HEK293 (cell line): ENCODE measurements at regions of chr6 and their contacts with region 1.

Region 1: GRCh38 chr6:70221025-70221714 is 81.7 kb downstream of the COL9A1 start:
- H3K4me3 ChIP-seq: no peak overlapping the region
- H3K27ac ChIP-seq: no peak overlapping the region
- H3K4me1 ChIP-seq: no peaks in the 10 kb centered on the region
- CTCF ChIP-seq: 0 out of 2 replicates have a peak, but pooled peaks have one; percentile 27

Region 2: DNA sequence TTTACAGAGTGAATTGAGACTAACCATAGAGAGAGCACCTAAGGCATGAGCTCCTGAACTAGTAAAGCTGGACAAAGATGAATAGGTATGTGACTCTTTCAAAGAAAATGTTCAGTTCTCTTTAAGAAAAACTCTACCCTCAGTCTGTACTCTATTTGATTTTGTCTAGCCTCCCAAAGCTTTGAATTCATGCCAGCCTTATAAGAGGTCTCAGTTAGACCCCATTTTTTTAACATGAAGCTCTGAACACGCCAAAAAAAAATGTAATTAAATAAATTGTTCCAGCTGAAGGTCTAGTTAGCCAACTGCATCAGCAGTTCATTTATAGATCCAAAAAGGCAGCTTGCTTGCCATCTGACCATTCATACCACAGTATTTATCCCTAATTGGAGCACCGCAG is 10.1 kb after region 1 on chr6:
- CTCF ChIA-PET with region 1: interaction called, 52 read pairs
- POLR2A ChIA-PET with region 1: no interaction called
- H3K4me3 ChIP-seq: no peak overlapping the region
- H3K27ac ChIP-seq: no peak overlapping the region
- H3K4me1 ChIP-seq: no peaks in the 10 kb centered on the region
- CTCF ChIP-seq: no peak

Region 3: GRCh38 chr6:70241991-70242420 is 20.8 kb after region 1 on chr6:
- CTCF ChIA-PET with region 1: interaction called, 11 read pairs
- POLR2A ChIA-PET with region 1: no interaction called
- H3K4me3 ChIP-seq: no peak overlapping the region
- H3K27ac ChIP-seq: no peak overlapping the region
- H3K4me1 ChIP-seq: no peaks in the 10 kb centered on the region
- CTCF ChIP-seq: no peak

Region 4: GRCh38 chr6:70289299-70289698 is 68.1 kb after region 1 on chr6:
- CTCF ChIA-PET with region 1: interaction called, 26 read pairs
- POLR2A ChIA-PET with region 1: no interaction called
- H3K4me3 ChIP-seq: no peak overlapping the region
- H3K27ac ChIP-seq: no peak overlapping the region
- H3K4me1 ChIP-seq: no peaks in the 10 kb centered on the region
- CTCF ChIP-seq: 0 out of 2 replicates have a peak, but pooled peaks have one; percentile 20

Region 5: DNA sequence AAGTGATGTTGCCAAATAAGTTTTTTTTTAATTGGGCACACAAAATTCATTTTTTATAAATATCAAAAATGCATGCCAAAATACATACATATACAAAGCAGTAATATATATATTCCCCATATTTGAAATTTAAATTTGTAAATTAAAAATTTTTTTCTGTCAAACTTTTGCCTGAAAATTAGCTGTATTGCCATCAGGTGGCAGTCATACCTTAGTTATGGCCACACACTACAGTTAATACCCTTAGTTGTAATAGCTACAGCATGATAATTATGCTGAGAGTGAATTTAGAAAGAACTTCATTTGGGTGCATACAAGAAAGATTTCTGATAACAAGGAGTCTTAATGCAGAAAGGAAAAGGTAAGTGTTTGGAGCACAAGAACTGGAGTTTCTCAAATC is 299.4 kb after region 1 on chr6:
- CTCF ChIA-PET with region 1: interaction called, 10 read pairs
- POLR2A ChIA-PET with region 1: no interaction called
- H3K4me3 ChIP-seq: no peak overlapping the region
- H3K27ac ChIP-seq: no peak overlapping the region
- H3K4me1 ChIP-seq: no peaks in the 10 kb centered on the region
- CTCF ChIP-seq: 0 out of 2 replicates have a peak, but pooled peaks have one; percentile 27

Region 6: DNA sequence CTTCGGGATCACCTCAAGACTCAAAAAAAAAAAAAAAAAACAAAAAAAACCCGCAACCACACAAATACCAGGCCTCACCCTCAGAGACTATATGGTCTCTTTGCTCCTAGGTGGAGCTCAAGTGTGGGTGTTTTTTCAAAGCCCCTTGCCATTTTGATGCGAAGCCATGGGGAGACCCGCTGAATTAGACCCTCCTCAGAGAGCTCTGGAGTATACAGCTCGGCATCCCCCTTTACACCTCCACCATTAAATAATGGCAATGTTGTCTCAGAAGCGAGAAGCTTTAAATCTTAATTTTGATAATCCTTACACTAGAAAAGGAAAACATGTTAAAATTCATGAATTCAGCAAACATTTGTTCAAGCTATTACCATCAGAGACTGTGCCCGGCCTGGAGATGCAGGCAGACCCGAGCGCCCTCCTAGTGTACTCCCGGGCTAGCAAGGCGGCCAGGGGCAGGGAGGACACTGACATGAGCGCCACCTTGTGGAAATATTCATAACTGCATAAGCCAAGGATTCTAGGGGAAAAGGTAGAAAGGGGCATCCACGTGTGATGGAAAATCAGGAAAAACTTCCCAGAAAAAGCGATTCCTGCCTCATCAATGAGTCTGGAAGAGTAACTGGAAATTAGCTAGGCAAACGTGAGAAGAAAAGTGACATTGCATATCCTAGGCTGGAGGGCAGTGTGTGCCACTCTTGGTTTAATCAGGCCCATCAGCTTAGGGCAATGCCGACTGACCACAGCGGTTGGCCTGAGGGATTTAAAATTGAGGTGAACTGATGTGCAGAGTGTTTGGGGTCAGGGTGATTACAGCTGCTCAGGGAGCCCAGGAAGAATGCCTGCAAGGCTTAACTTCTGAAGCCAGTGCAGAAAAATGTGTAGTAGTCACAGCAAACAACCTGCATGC is 663.2 kb after region 1 on chr6:
- CTCF ChIA-PET with region 1: interaction called, 26 read pairs
- POLR2A ChIA-PET with region 1: no interaction called
- H3K4me3 ChIP-seq: no peak overlapping the region
- H3K27ac ChIP-seq: no peak overlapping the region
- H3K4me1 ChIP-seq: no peaks in the 10 kb centered on the region
- CTCF ChIP-seq: peak; percentile 82

Region 7: DNA sequence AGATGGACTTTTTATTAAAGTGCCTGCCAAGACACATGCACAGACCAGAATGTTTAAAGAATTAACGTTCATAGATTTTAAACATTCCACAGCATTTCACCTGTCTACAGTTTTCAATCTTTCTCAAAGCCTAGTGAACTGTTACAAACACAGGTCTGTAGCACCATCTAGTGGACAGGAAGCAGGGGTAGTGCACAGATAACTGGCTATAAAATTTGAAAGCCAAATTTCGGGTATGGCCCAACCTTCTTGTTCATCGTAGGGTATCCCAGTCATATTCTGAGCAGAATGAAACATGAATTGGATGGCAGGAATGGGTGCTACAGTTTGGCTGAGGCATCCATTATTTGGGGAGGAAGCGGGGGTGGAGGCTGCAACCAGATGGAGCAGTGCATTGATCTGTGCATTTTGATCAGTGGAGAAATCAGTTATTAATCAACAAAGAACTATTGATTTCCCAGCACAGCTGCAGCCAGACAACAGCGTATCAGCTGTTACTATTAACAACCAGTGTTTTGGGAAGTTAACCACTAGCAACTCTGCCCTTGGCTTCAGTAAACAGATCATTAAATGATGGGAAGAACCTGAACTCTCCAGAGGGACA is 791.8 kb after region 1 on chr6:
- CTCF ChIA-PET with region 1: interaction called, 47 read pairs
- POLR2A ChIA-PET with region 1: no interaction called
- H3K4me3 ChIP-seq: no peak overlapping the region
- H3K27ac ChIP-seq: no peak overlapping the region
- H3K4me1 ChIP-seq: no peaks in the 10 kb centered on the region
- CTCF ChIP-seq: peak; percentile 42; the same call in 1 of the 2 replicates